ENCODE measurements at regions of chr3 and their contacts with region 1.

Region 1: GRCh38 chr3:190701096-190701532 is 161.4 kb downstream of the GMNC start:
- DNase-seq: peak; percentile 23
- H3K4me3 ChIP-seq: no peak overlapping the region
- CTCF ChIP-seq: peak; percentile 71

Region 2: DNA sequence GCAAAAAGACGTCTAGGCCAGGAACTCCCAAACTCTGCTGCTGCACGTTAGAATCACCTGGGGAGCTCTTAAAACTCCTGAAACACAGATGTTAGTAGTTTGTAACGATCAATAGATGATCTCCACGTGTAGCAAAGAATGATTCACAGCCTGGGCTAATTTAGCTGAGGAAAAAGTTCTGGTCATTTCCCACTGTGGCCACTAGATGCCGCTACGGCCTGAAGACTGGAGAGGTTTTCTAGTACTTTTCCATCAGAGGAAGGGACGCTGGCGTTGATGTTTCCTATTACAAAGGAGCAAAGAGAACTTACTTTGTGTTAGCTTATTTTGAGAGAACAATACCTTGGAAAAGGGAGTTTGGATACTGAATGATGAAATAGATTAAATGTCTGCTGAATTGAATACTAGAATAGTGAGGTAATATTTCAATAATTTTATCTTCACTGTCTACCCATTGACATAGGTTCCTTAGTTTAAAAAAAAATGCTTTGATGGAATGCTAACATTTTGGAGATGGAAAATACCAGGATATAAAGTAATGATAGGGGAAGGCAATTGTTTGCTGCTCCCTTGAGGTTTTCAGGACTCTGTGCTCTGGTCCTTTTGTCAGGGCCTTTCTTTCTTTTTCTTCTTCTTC is 739.5 kb before region 1 on chr3:
- in situ Hi-C with region 1: loop called (anchors 25 kb)
- DNase-seq: peak; percentile 78
- H3K4me3 ChIP-seq: no peak overlapping the region
- CTCF ChIP-seq: peak; percentile 84

Region 3: DNA sequence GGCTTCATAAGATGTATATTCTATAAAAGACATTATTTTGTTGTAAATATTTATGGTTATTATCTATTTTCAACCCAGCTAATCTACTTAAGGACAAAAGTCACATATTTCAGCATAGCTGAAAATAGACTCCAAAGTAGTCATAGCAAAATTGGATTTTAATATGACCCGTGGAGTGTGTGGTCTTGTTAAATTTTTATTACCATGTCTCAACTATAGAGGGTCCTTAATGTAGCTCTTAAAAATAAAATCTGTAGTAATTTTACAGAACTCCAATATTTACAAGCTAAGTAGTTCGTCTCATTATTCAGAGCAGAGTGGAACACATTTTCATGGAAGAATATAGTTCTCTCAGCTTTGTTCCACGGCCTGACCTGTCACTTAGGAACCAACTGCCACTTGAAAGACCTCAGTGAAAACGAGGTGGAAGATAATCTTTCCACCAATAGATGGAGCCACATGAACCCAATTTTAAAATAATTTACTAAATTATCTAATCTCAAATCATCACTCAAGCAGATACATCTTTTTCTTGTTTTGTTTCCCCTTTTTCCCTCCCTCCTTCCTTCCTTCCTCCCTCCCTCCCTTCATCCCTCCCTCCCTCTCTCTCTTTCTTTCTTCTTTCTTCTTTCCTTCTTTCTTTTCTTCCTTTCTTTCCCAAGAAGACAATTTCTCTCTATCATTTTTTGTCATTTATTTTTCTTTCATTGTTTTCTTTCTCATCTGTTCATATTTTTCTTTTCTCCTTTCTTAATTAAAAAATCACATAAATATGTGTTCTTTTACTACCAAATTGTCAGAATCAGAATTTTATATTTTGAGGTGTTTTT is 476.0 kb before region 1 on chr3:
- in situ Hi-C with region 1: loop called (anchors 25 kb)
- DNase-seq: no peak
- H3K4me3 ChIP-seq: no peak overlapping the region
- CTCF ChIP-seq: peak; percentile 47

Region 4: GRCh38 chr3:190629088-190629487 is 72.0 kb before region 1 on chr3:
- in situ Hi-C with region 1: no loop called
- DNase-seq: no peak
- H3K4me3 ChIP-seq: no peak overlapping the region
- CTCF ChIP-seq: no peak